Activated CD8-positive, alpha-beta T cell treated with anti-CD3 and anti-CD28 coated beads for 36 hours (primary cell): ENCODE measurements at regions of chr4 and their contacts with region 1.

Region 1: GRCh38 chr4:152500800-152501434 is 35.0 kb downstream of the FBXW7 start:
- DNase-seq: peak; percentile 69
- ATAC-seq: peak; percentile 81
- H3K4me3 Mint-ChIP-seq: no peak overlapping the region
- H3K27ac Mint-ChIP-seq: no peak overlapping the region
- H3K4me1 Mint-ChIP-seq: peaks cover 34% of the 10 kb centered on the region
- H3K27me3 Mint-ChIP-seq: no peaks in the 10 kb centered on the region
- CTCF ChIP-seq: peak; percentile 92

Region 2: DNA sequence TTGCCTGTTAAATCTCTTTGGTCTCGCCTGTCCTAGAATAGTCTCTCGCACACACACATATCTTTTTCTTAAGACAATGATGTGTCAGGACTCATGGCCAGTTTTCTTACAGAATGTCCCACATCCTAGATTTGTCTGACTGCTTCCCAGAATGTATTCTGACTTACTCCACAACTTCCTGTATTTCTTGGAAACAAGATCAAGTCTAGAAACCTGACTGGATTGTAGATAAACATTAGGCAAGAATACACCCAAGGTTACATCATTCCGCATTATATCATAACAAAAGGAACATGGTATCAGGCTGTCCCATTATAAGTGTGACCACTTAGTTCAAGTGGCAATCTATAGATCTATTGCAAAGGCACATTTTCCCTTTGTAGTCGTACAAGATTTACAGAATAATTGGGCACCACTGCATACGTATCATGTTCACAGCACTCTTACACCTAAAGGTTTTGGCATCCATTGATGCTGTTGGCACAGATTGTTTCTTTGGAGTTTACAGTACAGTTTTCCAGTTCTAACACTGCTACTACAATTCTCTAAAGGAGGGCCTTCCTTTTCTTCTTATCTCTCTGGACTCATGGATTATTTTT is 21.4 kb before region 1 on chr4:
- CTCF ChIA-PET with region 1: interaction called, 10 read pairs
- POLR2A ChIA-PET with region 1: no interaction called
- intact Hi-C with region 1: no loop called
- DNase-seq: no peak
- ATAC-seq: no peak
- H3K4me3 Mint-ChIP-seq: no peak overlapping the region
- H3K27ac Mint-ChIP-seq: no peak overlapping the region
- H3K4me1 Mint-ChIP-seq: peaks cover 32% of the 10 kb centered on the region
- H3K27me3 Mint-ChIP-seq: no peaks in the 10 kb centered on the region
- CTCF ChIP-seq: no peak

Region 3: GRCh38 chr4:152525873-152526272 is 25.0 kb after region 1 on chr4:
- CTCF ChIA-PET with region 1: interaction called, 24 read pairs
- POLR2A ChIA-PET with region 1: no interaction called
- intact Hi-C with region 1: no loop called
- DNase-seq: no peak
- ATAC-seq: peak; percentile 47
- H3K4me3 Mint-ChIP-seq: no peak overlapping the region
- H3K27ac Mint-ChIP-seq: peak overlapping the region; percentile 34
- H3K4me1 Mint-ChIP-seq: peaks cover 68% of the 10 kb centered on the region
- H3K27me3 Mint-ChIP-seq: no peaks in the 10 kb centered on the region
- CTCF ChIP-seq: no peak

Region 4: DNA sequence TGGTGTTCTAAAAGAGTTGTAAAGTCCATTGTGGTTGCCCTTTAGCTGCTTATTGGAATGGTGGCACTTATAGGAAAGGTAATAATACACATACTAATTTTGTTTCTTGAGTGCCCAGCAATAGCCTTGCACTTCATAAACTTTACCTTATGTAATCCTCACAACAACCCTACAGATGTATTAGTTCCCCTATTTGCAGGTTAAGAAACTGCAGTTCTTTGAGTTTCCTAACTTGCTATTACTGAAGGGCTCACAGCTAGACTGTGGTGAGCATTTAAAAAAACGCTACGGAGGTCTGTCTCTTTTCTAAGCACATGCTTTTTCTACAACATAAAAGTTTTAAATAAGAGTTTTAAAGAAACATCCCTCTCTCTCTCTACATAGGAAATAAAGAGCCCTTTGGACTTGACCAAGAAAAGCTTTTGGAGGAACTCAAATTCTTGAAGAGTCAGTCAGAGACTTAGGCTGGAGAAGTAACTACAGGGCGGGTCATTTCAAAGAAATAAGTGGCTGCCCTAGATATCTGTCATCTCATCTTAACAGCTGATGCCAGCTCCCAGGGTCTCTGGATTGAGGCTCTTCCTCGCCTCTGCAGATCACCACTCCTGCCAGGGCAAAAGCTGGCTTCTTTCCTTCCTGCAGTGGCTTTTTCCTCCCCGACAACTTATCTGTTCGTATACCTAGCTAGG is 76.9 kb after region 1 on chr4:
- CTCF ChIA-PET with region 1: interaction called, 26 read pairs
- POLR2A ChIA-PET with region 1: no interaction called
- intact Hi-C with region 1: no loop called
- DNase-seq: no peak
- ATAC-seq: no peak
- H3K4me3 Mint-ChIP-seq: no peak overlapping the region
- H3K27ac Mint-ChIP-seq: no peak overlapping the region
- H3K4me1 Mint-ChIP-seq: no peaks in the 10 kb centered on the region
- H3K27me3 Mint-ChIP-seq: no peaks in the 10 kb centered on the region
- CTCF ChIP-seq: no peak

Region 5: GRCh38 chr4:152640058-152640833 is 139.3 kb after region 1 on chr4:
- CTCF ChIA-PET with region 1: interaction called, 149 read pairs
- POLR2A ChIA-PET with region 1: no interaction called
- intact Hi-C with region 1: loop called (anchors 2 kb)
- DNase-seq: no peak
- ATAC-seq: no peak
- H3K4me3 Mint-ChIP-seq: no peak overlapping the region
- H3K27ac Mint-ChIP-seq: no peak overlapping the region
- H3K4me1 Mint-ChIP-seq: peaks cover 34% of the 10 kb centered on the region
- H3K27me3 Mint-ChIP-seq: no peaks in the 10 kb centered on the region
- CTCF ChIP-seq: peak; percentile 94

Region 6: GRCh38 chr4:152779513-152780266 is 278.8 kb after region 1 on chr4 and contains the starts of genes ARFIP1 and TIGD4:
- CTCF ChIA-PET with region 1: interaction called, 17 read pairs
- POLR2A ChIA-PET with region 1: interaction called, 3 read pairs
- intact Hi-C with region 1: no loop called
- DNase-seq: peak; percentile 96
- ATAC-seq: peak; percentile 89
- H3K4me3 Mint-ChIP-seq: peak within 1 kb of the TSS; percentile 97
- H3K27ac Mint-ChIP-seq: peak within 1 kb of the TSS; percentile 92
- H3K4me1 Mint-ChIP-seq: peaks cover 38% of the 10 kb centered on the region
- H3K27me3 Mint-ChIP-seq: peaks cover 8% of the 10 kb centered on the region
- CTCF ChIP-seq: no peak
- total RNA-seq, gene ARFIP1: 7.2 to 8.9 TPM
- total RNA-seq, gene TIGD4: 0.27 to 0.47 TPM